Sigmoid colon (tissue), 7 donors: ENCODE measurements at regions of chr10 and their contacts with region 1.

Region 1: DNA sequence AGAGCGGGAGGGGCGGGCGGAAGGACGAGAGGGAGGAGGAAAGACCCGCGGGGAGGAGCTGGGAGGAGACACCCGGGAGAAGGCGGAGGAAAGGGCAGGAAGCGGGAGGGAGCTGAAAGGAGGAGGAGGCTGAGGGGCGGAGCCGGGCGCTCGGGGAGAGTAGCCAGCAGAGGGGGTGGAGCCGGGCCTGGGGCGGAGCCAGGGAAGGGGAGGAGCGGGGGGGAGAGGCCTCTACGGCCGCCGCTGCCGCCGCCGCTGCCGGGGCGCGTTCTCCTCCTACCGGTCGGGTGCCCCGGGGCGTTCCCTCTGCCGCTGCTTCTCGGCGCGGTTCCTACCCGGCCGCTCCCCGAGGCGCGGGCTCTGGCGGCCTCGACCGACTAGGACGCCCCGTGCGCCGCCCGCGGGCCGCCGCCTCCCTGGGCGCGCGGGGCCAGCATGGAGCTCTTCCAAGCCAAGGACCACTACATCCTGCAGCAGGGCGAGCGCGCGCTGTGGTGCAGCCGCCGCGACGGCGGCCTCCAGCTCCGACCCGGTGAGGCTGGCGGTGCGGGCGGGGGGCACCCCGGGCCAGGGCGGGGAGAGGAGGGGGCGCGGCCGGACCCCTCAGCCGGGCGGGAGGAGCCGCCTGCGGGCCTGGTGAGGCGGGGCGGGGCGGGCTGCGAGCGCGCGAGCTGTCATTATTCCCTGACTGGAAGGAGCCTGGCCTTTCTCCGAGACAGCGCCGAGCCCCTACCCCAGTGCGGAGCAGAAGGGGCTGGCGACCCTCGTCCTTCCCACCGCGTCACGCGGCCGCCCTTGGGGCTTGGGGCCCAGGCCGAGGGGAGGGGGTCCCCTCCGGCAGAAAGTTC is at the start of gene INPP5F:
- DNase-seq: peak; percentile 100
- H3K4me3 ChIP-seq: peak within 1 kb of the TSS; percentile 73 to 98 (median 88)
- H3K27ac ChIP-seq: peak within 1 kb of the TSS; percentile 92 to 98 (median 94)
- H3K4me1 ChIP-seq: peaks cover 0 to 33% (median 29%) of the 10 kb centered on the region in 4 donors
- H3K27me3 ChIP-seq: no peaks in the 10 kb centered on the region
- CTCF ChIP-seq: peak in 1 of 4 experiments; percentile 46
- EP300 ChIP-seq: no peak
- POLR2A ChIP-seq: no peak
- total RNA-seq, gene INPP5F: 16.0 to 22.2 (median 19.2) TPM

Region 2: DNA sequence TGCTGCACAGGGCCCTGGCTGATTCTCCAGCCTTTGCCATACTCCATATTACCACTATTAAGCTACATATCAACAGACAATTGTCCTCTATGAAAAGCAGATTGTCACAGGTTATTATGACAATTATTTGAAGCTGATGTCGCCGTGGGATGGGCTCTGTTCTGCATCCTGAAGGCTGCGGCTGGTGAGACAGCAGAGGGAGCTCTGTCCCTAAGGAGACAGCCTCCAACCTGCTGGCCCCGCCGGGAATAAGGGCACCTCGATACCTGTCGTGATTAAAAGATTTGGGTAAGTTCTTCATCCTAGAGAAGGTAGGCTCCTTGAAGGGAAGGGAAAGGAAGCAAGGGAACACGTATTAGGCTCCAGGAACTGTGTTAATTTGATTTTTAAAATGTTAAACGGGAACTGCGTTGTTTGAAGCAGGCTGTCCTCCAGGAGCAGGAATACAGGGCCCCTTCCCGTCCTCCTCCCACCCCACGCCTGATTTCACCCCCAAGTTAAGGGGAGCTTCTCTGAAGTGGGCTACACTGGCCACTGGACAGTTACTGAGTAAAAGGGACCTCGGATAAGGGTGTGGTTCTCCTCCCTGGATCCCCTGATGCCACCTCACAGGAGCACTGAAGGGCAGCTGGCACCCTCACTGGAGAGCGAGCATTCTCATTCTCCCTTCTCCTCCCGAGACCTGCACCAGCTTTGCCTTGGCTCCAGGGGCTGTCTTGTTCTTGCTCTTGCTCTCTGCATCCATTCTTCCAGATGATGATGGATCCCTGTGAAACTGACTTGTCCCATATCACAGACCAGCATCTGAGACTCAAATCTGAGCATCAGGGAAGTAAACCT is 117.5 kb before region 1 on chr10:
- intact Hi-C with region 1: loop called (anchors 5 kb)
- DNase-seq: peak; percentile 79
- H3K4me3 ChIP-seq: peak overlapping the region in 1 of 4 donors; percentile 15
- H3K27ac ChIP-seq: no peak overlapping the region
- H3K4me1 ChIP-seq: peaks cover 0 to 6% (median 2%) of the 10 kb centered on the region in 4 donors
- H3K27me3 ChIP-seq: no peaks in the 10 kb centered on the region
- CTCF ChIP-seq: peak; percentile 53 to 67 (median 61)
- EP300 ChIP-seq: no peak
- POLR2A ChIP-seq: no peak

Region 3: DNA sequence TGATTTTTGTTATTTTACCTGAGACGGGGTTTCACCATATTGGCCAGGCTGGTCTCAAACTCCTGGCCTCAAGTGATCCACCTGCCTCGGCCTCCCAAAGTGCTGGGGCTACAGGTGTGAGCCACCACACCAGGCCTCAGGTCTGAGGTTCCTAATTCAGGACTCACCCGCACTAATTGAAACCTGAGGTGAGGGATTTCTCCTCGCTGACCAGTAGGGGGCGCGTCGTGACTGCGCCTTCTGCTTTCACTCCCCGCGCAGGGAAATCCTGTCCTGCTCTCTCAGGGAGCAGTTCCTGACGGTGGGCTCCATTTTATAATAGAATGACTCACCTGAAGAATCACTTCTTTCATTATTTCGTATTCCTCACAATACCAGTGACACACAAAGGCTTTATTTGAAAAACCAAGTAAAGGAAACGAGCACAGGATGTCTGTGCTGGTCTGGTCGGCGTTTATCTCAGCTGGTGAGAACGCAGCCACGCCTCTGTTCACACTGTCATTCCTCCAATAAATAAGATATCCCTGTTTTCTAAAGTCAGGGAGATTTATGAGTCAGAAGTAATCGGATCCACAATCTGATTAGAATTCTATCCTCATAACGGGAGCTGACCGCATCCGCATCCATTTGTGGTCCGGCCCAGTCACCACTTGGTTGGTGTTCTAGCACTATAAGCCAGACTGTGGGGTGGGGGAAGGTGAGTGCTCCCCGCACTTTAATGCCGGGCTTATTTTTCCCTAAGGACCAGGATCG is 39.4 kb before region 1 on chr10:
- intact Hi-C with region 1: loop called (anchors 1 kb)
- DNase-seq: peak; percentile 90
- H3K4me3 ChIP-seq: peak overlapping the region in 3 of 4 donors; percentile 15 to 22 (median 15)
- H3K27ac ChIP-seq: peak overlapping the region in 3 of 4 donors; percentile 29 to 59 (median 49)
- H3K4me1 ChIP-seq: peaks cover 0 to 11% (median 8%) of the 10 kb centered on the region in 4 donors
- H3K27me3 ChIP-seq: no peaks in the 10 kb centered on the region
- CTCF ChIP-seq: peak; percentile 75 to 95 (median 84)
- EP300 ChIP-seq: no peak
- POLR2A ChIP-seq: no peak